CD4-positive, alpha-beta T cell (primary cell): ENCODE measurements at regions of chr16 and their contacts with region 1.

Region 1: GRCh38 chr16:1964506-1965395 is at the start of gene RPS2:
- DNase-seq: peak; percentile 96 to 100 (median 98)
- ATAC-seq: peak; percentile 89
- H3K4me3 ChIP-seq: peak within 1 kb of the TSS; percentile 91
- H3K4me3 Mint-ChIP-seq: peak within 1 kb of the TSS; percentile 98
- H3K27ac ChIP-seq: peak within 1 kb of the TSS; percentile 96 to 99
- H3K27ac Mint-ChIP-seq: peak within 1 kb of the TSS; percentile 98
- H3K4me1 ChIP-seq: peaks cover 58% of the 10 kb centered on the region
- H3K4me1 Mint-ChIP-seq: peaks cover 50% of the 10 kb centered on the region
- H3K27me3 ChIP-seq: no peaks in the 10 kb centered on the region
- H3K27me3 Mint-ChIP-seq: no peaks in the 10 kb centered on the region
- CTCF ChIP-seq: no peak
- total RNA-seq, gene RPS2: 3,604 to 3,755 TPM

Region 2: GRCh38 chr16:1579201-1579600 is 385.6 kb before region 1 on chr16:
- CTCF ChIA-PET with region 1: no interaction called
- POLR2A ChIA-PET with region 1: no interaction called
- intact Hi-C with region 1: no loop called
- DNase-seq: peak in 4 of 14 experiments; percentile 23 to 47 (median 30)
- ATAC-seq: no peak
- H3K4me3 ChIP-seq: no peak overlapping the region
- H3K4me3 Mint-ChIP-seq: no peak overlapping the region
- H3K27ac ChIP-seq: no peak overlapping the region
- H3K27ac Mint-ChIP-seq: no peak overlapping the region
- H3K4me1 ChIP-seq: no peaks in the 10 kb centered on the region
- H3K4me1 Mint-ChIP-seq: no peaks in the 10 kb centered on the region
- H3K27me3 ChIP-seq: no peaks in the 10 kb centered on the region
- H3K27me3 Mint-ChIP-seq: no peaks in the 10 kb centered on the region
- CTCF ChIP-seq: no peak

Region 3: DNA sequence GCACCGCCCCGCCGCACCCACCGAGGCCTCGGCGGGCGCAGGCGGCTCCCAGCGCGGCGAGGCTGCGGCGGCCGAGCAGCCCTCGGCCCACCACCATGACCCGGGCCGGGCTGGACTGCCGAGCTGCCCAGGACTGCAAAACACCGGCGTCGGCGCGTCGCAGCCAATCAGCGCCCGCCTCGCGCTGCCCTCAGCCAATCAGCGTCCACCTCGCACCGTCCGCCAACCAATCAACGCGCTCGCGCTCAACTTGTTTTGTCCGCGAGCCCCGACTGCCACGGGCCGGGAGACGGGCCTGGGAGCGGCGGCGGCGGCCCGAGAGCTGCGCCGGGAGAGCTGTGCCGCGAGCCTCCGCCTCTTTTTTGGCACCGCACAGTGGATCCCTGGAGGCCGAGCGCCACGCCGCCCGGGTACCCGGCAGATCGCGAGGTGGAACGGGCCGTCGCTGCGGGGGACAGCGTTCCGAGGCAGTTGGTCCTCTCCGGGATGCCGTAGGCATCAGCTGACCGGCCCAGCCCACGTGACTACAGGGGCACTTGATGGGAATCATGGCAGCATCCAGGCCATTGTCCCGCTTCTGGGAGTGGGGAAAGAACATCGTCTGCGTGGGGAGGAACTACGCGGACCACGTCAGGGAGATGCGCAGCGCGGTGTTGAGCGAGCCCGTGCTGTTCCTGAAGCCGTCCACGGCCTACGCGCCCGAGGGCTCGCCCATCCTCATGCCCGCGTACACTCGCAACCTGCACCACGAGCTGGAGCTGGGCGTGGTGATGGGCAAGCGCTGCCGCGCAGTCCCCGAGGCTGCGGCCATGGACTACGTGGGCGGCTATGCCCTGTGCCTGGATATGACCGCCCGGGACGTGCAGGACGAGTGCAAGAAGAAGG is 137.8 kb before region 1 on chr16 and contains the starts of genes FAHD1 and HAGH:
- CTCF ChIA-PET with region 1: no interaction called
- POLR2A ChIA-PET with region 1: interaction called, 17 read pairs
- intact Hi-C with region 1: no loop called
- DNase-seq: peak; percentile 82 to 97 (median 88)
- ATAC-seq: peak; percentile 82
- H3K4me3 ChIP-seq: peak within 1 kb of the TSS; percentile 76
- H3K4me3 Mint-ChIP-seq: peak within 1 kb of the TSS; percentile 91
- H3K27ac ChIP-seq: peak within 1 kb of the TSS; percentile 72 to 77
- H3K27ac Mint-ChIP-seq: peak within 1 kb of the TSS; percentile 90
- H3K4me1 ChIP-seq: peaks cover 51% of the 10 kb centered on the region
- H3K4me1 Mint-ChIP-seq: peaks cover 37% of the 10 kb centered on the region
- H3K27me3 ChIP-seq: no peaks in the 10 kb centered on the region
- H3K27me3 Mint-ChIP-seq: no peaks in the 10 kb centered on the region
- CTCF ChIP-seq: no peak
- total RNA-seq, gene FAHD1: 4.1 to 4.5 TPM
- total RNA-seq, gene HAGH: 20.9 to 22.7 TPM

Region 4: GRCh38 chr16:1920727-1921171 is 44.0 kb before region 1 on chr16:
- CTCF ChIA-PET with region 1: no interaction called
- POLR2A ChIA-PET with region 1: no interaction called
- intact Hi-C with region 1: no loop called
- DNase-seq: no peak
- ATAC-seq: no peak
- H3K4me3 ChIP-seq: no peak overlapping the region
- H3K4me3 Mint-ChIP-seq: no peak overlapping the region
- H3K27ac ChIP-seq: no peak overlapping the region
- H3K27ac Mint-ChIP-seq: no peak overlapping the region
- H3K4me1 ChIP-seq: peaks cover 14% of the 10 kb centered on the region
- H3K4me1 Mint-ChIP-seq: no peaks in the 10 kb centered on the region
- H3K27me3 ChIP-seq: peaks cover 49 to 68% of the 10 kb centered on the region in 2 experiments
- H3K27me3 Mint-ChIP-seq: peaks cover 62% of the 10 kb centered on the region
- CTCF ChIP-seq: no peak

Region 5: GRCh38 chr16:1942810-1943726 is 21.7 kb before region 1 on chr16 and contains the start of gene MSRB1:
- CTCF ChIA-PET with region 1: no interaction called
- POLR2A ChIA-PET with region 1: interaction called, 23 read pairs
- intact Hi-C with region 1: no loop called
- DNase-seq: peak; percentile 97 to 100 (median 99)
- ATAC-seq: peak; percentile 99
- H3K4me3 ChIP-seq: peak within 1 kb of the TSS; percentile 92
- H3K4me3 Mint-ChIP-seq: peak within 1 kb of the TSS; percentile 93
- H3K27ac ChIP-seq: peak within 1 kb of the TSS; percentile 40 to 43
- H3K27ac Mint-ChIP-seq: peak within 1 kb of the TSS; percentile 47
- H3K4me1 ChIP-seq: peaks cover 28% of the 10 kb centered on the region
- H3K4me1 Mint-ChIP-seq: peaks cover 18% of the 10 kb centered on the region
- H3K27me3 ChIP-seq: no peaks in the 10 kb centered on the region
- H3K27me3 Mint-ChIP-seq: no peaks in the 10 kb centered on the region
- CTCF ChIP-seq: no peak
- total RNA-seq, gene MSRB1: 2.3 to 2.4 TPM

Region 6: GRCh38 chr16:1983544-1984346 is 19.0 kb after region 1 on chr16 and contains the start of gene GFER:
- CTCF ChIA-PET with region 1: no interaction called
- POLR2A ChIA-PET with region 1: interaction called, 62 read pairs
- intact Hi-C with region 1: no loop called
- DNase-seq: peak in 10 of 14 experiments; percentile 48 to 87 (median 60)
- ATAC-seq: peak; percentile 60
- H3K4me3 ChIP-seq: peak within 1 kb of the TSS; percentile 65
- H3K4me3 Mint-ChIP-seq: peak within 1 kb of the TSS; percentile 87
- H3K27ac ChIP-seq: no peak within 1 kb of the TSS
- H3K27ac Mint-ChIP-seq: peak within 1 kb of the TSS; percentile 56
- H3K4me1 ChIP-seq: peaks cover 47% of the 10 kb centered on the region
- H3K4me1 Mint-ChIP-seq: peaks cover 23% of the 10 kb centered on the region
- H3K27me3 ChIP-seq: peaks cover 29 to 31% of the 10 kb centered on the region in 2 experiments
- H3K27me3 Mint-ChIP-seq: peaks cover 42% of the 10 kb centered on the region
- CTCF ChIP-seq: peak; percentile 14
- total RNA-seq, gene GFER: 14.5 TPM